ENCODE measurements at regions of chr13 and their contacts with region 1.

Region 1: DNA sequence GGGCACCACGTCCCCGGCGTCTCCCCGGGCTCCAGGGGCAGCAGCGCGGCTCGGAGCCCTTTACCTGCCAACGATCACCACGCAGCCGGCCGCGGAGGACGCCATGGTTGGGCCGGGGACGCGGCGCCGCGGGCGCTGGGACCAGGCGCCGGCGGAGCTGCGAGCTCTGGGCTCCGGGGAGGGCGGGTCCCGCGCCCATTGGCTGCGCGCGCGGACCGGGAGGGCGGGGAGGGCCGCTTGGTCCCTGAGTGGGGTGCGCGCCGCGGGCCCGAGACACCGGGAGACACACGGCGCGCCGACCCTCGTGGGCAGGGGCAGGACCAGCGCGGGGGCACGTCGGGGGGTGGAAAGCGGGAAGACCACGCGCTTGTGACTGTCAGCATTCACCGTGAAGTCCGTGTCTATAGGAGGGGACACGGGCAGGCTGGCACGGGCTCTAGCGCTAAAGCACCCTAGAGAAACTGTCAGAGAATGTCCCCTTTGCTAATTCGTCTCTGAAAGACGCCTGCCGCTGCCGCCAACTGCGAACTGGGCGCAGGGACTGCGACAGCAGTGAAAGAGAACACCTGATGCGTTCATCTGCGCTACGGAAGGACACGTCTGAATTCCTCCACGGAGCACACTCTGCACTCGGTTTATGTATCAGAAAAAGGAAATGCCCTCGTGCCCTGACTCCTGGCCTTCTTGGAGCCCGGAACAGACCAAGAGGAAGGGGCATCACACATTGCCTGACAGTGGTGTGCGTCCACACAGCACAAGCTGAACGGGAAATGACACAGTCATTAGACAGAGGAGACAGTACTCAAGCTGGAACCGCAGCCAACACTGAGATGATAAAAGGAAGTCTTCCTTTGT is at the start of gene CRYL1:
- DNase-seq: peak; percentile 31
- ATAC-seq: peak; percentile 93
- H3K4me3 ChIP-seq: peak within 1 kb of the TSS; percentile 82 to 85 (median 82)
- H3K27ac ChIP-seq: peak within 1 kb of the TSS; percentile 87
- H3K4me1 ChIP-seq: peaks cover 70% of the 10 kb centered on the region
- H3K27me3 ChIP-seq: no peaks in the 10 kb centered on the region
- CTCF ChIP-seq: no peak
- EP300 ChIP-seq: no peak
- POLR2A ChIP-seq: peak; percentile 51 to 72
- RAD21 ChIP-seq: peak; percentile 49; the same call in 1 of the 2 replicates
- total RNA-seq, gene CRYL1: 57.2 and 71.7 TPM in 2 replicates

Region 2: DNA sequence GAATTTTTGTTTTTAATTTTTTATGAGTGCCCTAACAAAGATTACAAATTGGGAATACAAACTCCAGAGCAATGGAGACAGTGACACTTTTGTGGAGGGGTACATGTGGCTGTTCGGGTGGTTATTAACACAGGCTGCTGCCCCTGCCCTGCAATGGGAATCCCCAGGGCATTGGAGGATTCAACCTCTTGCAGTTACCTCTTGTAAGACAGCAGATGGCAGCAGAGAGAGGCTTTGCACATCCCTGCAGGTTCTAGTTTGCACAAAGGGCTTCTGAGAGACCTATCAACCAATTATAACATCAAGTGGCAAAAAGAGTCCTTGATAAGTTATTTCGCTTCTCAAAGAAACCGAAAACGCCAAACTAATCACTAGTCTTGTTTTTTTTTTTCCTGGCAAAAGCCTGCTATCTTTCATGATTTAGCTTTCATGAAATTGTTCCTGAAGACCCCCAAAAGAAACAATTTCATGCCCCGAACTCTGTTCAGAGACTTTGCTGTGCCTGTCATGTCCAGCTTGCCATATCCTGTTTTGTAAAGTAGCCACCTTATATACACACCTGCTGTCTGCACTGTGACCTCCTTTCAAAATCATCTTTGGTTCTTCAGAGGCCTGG is 343.6 kb before region 1 on chr13:
- CTCF ChIA-PET with region 1: no interaction called
- POLR2A ChIA-PET with region 1: no interaction called
- in situ Hi-C with region 1: no loop called
- intact Hi-C with region 1: no loop called
- DNase-seq: peak; percentile 63
- ATAC-seq: peak; percentile 95
- H3K4me3 ChIP-seq: no peak overlapping the region
- H3K27ac ChIP-seq: no peak overlapping the region
- H3K4me1 ChIP-seq: no peaks in the 10 kb centered on the region
- H3K27me3 ChIP-seq: peaks cover 2 to 9% of the 10 kb centered on the region in 2 experiments; a peak in 2 of 5 replicates
- CTCF ChIP-seq: peak; percentile 82
- EP300 ChIP-seq: no peak
- POLR2A ChIP-seq: no peak
- RAD21 ChIP-seq: peak; percentile 50; the same call in 1 of the 2 replicates

Region 3: GRCh38 chr13:20553311-20553710 is 27.4 kb after region 1 on chr13:
- CTCF ChIA-PET with region 1: no interaction called
- POLR2A ChIA-PET with region 1: interaction called, 11 read pairs
- in situ Hi-C with region 1: no loop called
- intact Hi-C with region 1: no loop called
- DNase-seq: peak; percentile 83
- ATAC-seq: peak; percentile 89
- H3K4me3 ChIP-seq: no peak overlapping the region
- H3K27ac ChIP-seq: peak overlapping the region; percentile 77
- H3K4me1 ChIP-seq: peaks cover 91% of the 10 kb centered on the region
- H3K27me3 ChIP-seq: no peaks in the 10 kb centered on the region
- CTCF ChIP-seq: no peak
- EP300 ChIP-seq: peak in 1 of 2 experiments; percentile 72; a peak in 2 of 4 replicates
- POLR2A ChIP-seq: peak; percentile 25 to 41; a peak in 1 of 4 replicates
- RAD21 ChIP-seq: no peak; the same call in 1 of the 2 replicates

Region 4: GRCh38 chr13:20566898-20567874 is 41.3 kb after region 1 on chr13 and contains the start of gene IFT88:
- CTCF ChIA-PET with region 1: no interaction called
- POLR2A ChIA-PET with region 1: interaction called, 11 read pairs
- in situ Hi-C with region 1: no loop called
- intact Hi-C with region 1: loop called (anchors 1 kb)
- DNase-seq: peak; percentile 81
- ATAC-seq: peak; percentile 93
- H3K4me3 ChIP-seq: peak within 1 kb of the TSS; percentile 65 to 74 (median 72)
- H3K27ac ChIP-seq: peak within 1 kb of the TSS; percentile 93
- H3K4me1 ChIP-seq: peaks cover 24% of the 10 kb centered on the region
- H3K27me3 ChIP-seq: no peaks in the 10 kb centered on the region
- CTCF ChIP-seq: no peak; the same call in 1 of the 2 replicates
- EP300 ChIP-seq: 0 out of 4 replicates have a peak, but pooled peaks of 1 of the 2 experiments have one; percentile 20
- POLR2A ChIP-seq: peak; percentile 59 to 84; a peak in 3 of 4 replicates
- RAD21 ChIP-seq: peak; percentile 67
- total RNA-seq, gene IFT88: 19.8 and 19.9 TPM in 2 replicates

Region 5: GRCh38 chr13:20580257-20580656 is 54.3 kb after region 1 on chr13:
- CTCF ChIA-PET with region 1: no interaction called
- POLR2A ChIA-PET with region 1: interaction called, 3 read pairs
- in situ Hi-C with region 1: no loop called
- intact Hi-C with region 1: loop called (anchors 5 kb)
- DNase-seq: no peak
- ATAC-seq: no peak
- H3K4me3 ChIP-seq: no peak overlapping the region
- H3K27ac ChIP-seq: no peak overlapping the region
- H3K4me1 ChIP-seq: no peaks in the 10 kb centered on the region
- H3K27me3 ChIP-seq: no peaks in the 10 kb centered on the region
- CTCF ChIP-seq: no peak
- EP300 ChIP-seq: no peak
- POLR2A ChIP-seq: no peak
- RAD21 ChIP-seq: no peak